MCF 10A (cell line): ENCODE measurements at regions of chr9 and their contacts with region 1.

Region 1: GRCh38 chr9:91361291-91362050 is at the start of gene AUH:
- DNase-seq: peak; percentile 75
- H3K4me3 Mint-ChIP-seq: peak within 1 kb of the TSS; percentile 93
- H3K27ac Mint-ChIP-seq: peak within 1 kb of the TSS; percentile 98
- H3K4me1 Mint-ChIP-seq: peaks cover 38% of the 10 kb centered on the region
- H3K27me3 Mint-ChIP-seq: no peaks in the 10 kb centered on the region
- CTCF ChIP-seq: no peak
- total RNA-seq, gene AUH: 16.1 and 20.9 TPM in 2 replicates

Region 2: DNA sequence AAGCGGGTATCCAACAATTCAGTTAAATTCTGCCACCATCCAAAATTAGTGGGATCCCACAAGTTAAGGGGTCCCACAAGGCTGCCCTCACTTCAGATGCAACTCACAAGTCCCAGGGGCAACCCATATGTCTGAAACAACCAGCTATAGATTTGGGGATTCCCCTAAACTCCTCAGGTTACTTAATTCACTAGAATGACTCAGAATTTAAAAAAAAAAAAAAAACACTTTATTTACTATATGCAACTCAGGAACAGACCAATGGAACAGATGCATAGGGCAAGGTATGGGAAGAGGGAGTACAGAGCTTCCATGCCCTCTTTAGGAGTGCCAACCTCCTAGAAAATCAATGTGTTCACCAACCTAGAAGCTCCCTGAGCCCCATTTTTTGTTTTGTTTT is 14.8 kb before region 1 on chr9:
- CTCF ChIA-PET with region 1: interaction called, 18 read pairs
- POLR2A ChIA-PET with region 1: interaction called, 6 read pairs
- intact Hi-C with region 1: no loop called
- DNase-seq: peak; percentile 43
- H3K4me3 Mint-ChIP-seq: no peak overlapping the region
- H3K27ac Mint-ChIP-seq: no peak overlapping the region
- H3K4me1 Mint-ChIP-seq: peaks cover 14% of the 10 kb centered on the region
- H3K27me3 Mint-ChIP-seq: no peaks in the 10 kb centered on the region
- CTCF ChIP-seq: no peak

Region 3: GRCh38 chr9:91395553-91396471 is 34.3 kb after region 1 on chr9:
- CTCF ChIA-PET with region 1: no interaction called
- POLR2A ChIA-PET with region 1: interaction called, 7 read pairs
- intact Hi-C with region 1: loop called (anchors 2 kb)
- DNase-seq: peak; percentile 75
- H3K4me3 Mint-ChIP-seq: peak overlapping the region; percentile 8
- H3K27ac Mint-ChIP-seq: peak overlapping the region; percentile 23
- H3K4me1 Mint-ChIP-seq: peaks cover 26% of the 10 kb centered on the region
- H3K27me3 Mint-ChIP-seq: no peaks in the 10 kb centered on the region
- CTCF ChIP-seq: no peak